Sigmoid colon (tissue), 7 donors: ENCODE measurements at regions of chr18 and their contacts with region 1.

Region 1: GRCh38 chr18:35355140-35355618 is 11.0 kb upstream of the ZNF24 start:
- DNase-seq: peak; percentile 81
- H3K4me3 ChIP-seq: peak overlapping the region in 2 of 4 donors; percentile 21 to 26
- H3K27ac ChIP-seq: peak overlapping the region in 3 of 4 donors; percentile 25 to 50 (median 49)
- H3K4me1 ChIP-seq: peaks cover 0 to 5% (median 0%) of the 10 kb centered on the region in 4 donors
- H3K27me3 ChIP-seq: no peaks in the 10 kb centered on the region
- CTCF ChIP-seq: peak; percentile 49 to 61 (median 54)
- EP300 ChIP-seq: no peak
- POLR2A ChIP-seq: no peak

Region 2: GRCh38 chr18:34976899-34977837 is 378.0 kb before region 1 on chr18:
- intact Hi-C with region 1: no loop called
- DNase-seq: peak; percentile 86
- H3K4me3 ChIP-seq: peak overlapping the region; percentile 55 to 83 (median 71)
- H3K27ac ChIP-seq: peak overlapping the region; percentile 16 to 79 (median 74)
- H3K4me1 ChIP-seq: peaks cover 0 to 23% (median 15%) of the 10 kb centered on the region in 4 donors
- H3K27me3 ChIP-seq: no peaks in the 10 kb centered on the region
- CTCF ChIP-seq: no peak
- EP300 ChIP-seq: no peak
- POLR2A ChIP-seq: peak in 1 of 2 donors; percentile 23

Region 3: DNA sequence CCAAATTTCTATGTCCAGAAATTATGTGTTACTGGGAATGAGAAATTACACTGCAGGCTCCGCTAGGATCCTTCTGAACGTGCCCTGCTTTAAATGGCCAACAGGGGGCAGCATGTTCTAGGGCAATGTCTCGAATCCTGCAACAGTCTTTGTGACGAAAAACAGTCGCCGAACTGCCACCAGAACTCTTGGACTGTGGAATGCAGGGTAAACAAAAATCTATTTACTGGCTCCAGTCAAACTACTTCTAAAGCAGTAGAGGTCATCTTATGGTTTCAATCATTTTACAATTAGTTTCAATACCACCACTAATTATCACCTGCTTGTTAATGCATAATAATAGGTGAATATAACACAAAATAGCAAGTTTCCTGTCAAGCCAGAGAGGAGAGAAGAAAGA is 124.1 kb before region 1 on chr18:
- intact Hi-C with region 1: loop called (anchors 2 kb)
- DNase-seq: peak; percentile 87
- H3K4me3 ChIP-seq: peak overlapping the region in 1 of 4 donors; percentile 1
- H3K27ac ChIP-seq: no peak overlapping the region
- H3K4me1 ChIP-seq: peaks cover 0 to 9% (median 2%) of the 10 kb centered on the region in 4 donors
- H3K27me3 ChIP-seq: no peaks in the 10 kb centered on the region
- CTCF ChIP-seq: peak; percentile 61 to 95 (median 84)
- EP300 ChIP-seq: no peak
- POLR2A ChIP-seq: no peak